H1 (cell line): ENCODE measurements at regions of chr2 and their contacts with region 1.

Region 1: DNA sequence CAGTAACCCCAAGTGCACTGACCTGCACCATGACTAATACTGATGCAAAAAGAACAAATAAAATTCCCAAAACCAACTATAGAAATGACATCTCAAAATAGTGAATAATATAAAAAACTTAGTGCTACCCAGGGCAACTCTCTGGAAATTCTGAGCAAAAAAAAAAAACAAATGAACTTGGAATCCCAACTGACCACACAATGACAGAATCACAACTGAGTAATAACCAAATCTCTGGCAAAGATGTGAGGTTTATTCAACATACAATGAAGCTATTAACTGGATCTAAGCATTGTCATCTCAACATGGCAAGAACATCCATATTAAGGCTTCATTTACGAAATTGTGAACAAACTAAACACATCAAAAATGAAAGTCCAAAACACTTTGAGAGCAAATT is 22.7 kb downstream of the EXOC6B start:
- DNase-seq: no peak
- H3K4me3 ChIP-seq: no peak overlapping the region
- H3K27ac ChIP-seq: no peak overlapping the region
- H3K4me1 ChIP-seq: no peaks in the 10 kb centered on the region
- H3K27me3 ChIP-seq: no peaks in the 10 kb centered on the region
- CTCF ChIP-seq: no peak
- EP300 ChIP-seq: no peak
- POLR2A ChIP-seq: no peak
- RAD21 ChIP-seq: no peak

Region 2: DNA sequence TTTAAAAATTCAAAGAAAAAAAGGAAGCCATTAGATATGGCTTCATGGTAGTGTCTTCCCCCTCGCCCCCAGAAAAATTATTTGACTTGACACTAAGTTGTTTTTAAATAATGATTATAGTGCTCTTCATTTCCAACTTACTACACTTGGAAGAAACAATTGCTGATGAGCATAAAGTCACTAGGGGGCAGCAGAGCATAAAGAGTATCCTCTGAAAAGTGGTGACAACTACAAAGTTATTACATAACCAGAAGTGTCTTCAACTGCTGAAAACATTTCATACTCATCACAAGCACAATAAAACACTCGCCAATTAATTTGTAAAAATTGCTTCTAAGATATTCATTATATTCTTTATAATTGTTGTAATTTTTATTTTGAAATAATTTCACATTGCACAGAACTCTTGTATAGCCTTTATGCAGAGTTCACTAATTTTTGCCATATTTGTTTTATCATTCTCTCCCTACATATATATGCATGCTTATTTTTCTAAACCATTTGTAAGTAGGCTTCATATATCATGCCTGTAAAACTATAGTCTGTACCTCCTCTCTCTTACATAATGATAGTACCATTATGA is 32.2 kb before region 1 on chr2:
- CTCF ChIA-PET with region 1: interaction called, 11 read pairs
- POLR2A ChIA-PET with region 1: no interaction called
- DNase-seq: no peak
- H3K4me3 ChIP-seq: no peak overlapping the region
- H3K27ac ChIP-seq: no peak overlapping the region
- H3K4me1 ChIP-seq: peaks cover 0 to 3% (median 0%) of the 10 kb centered on the region in 4 experiments; a peak in 1 of 7 replicates
- H3K27me3 ChIP-seq: no peaks in the 10 kb centered on the region
- CTCF ChIP-seq: peak in 2 of 3 experiments; percentile 65 to 68; a peak in 2 of 4 replicates
- EP300 ChIP-seq: no peak
- POLR2A ChIP-seq: no peak
- RAD21 ChIP-seq: peak; percentile 86 to 87